ENCODE measurements at regions of chr14 and their contacts with region 1.

Region 1: DNA sequence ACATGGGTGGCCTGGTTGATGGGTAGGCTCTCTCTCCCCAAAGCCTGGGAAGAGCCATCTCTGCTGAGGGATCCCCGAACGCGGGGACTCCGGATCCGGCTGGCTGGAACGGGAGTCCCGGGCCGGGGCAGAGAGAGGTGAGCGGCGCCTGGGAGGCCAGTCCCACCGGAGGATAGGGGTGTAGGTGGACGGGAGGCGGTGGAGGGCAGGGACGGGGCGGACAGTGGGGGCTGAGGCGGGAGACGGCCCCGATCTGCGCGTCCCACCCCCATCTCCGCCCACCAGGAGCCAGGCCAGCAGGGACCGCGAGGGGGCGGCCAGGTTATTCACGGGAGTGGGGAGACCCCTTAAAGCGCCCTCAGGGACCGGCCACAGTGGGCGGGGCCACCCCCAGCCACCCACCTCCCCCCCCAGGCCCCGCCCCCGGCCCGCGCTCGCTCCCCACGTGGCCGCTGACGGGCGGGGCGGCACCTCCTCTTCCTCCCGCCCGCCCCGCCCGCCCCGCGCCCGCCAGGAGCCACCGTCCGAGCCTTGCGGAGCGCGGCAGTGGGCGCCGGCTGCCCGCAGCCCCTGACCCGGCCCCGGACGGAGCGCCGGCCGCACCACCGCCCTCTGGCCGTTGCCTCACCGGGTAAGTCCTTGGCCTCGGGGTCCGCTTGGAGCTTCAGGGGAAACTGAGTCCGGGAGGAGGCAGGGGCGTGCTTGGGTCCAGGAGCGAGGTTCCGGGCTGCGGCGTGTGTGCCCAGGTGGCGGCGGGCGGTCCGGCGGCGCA is at the start of gene INF2:
- DNase-seq: peak; percentile 62
- ATAC-seq: peak; percentile 57
- H3K4me3 ChIP-seq: peak within 1 kb of the TSS; percentile 74 to 90 (median 86)
- H3K27ac ChIP-seq: peak within 1 kb of the TSS; percentile 93
- H3K4me1 ChIP-seq: peaks cover 63% of the 10 kb centered on the region
- H3K27me3 ChIP-seq: no peaks in the 10 kb centered on the region
- CTCF ChIP-seq: peak; percentile 66
- EP300 ChIP-seq: no peak
- POLR2A ChIP-seq: peak in 1 of 2 experiments; percentile 50; a peak in 2 of 4 replicates
- RAD21 ChIP-seq: no peak
- total RNA-seq, gene INF2: 16.4 and 18.1 TPM in 2 replicates

Region 2: GRCh38 chr14:104650057-104650981 is 39.0 kb before region 1 on chr14:
- CTCF ChIA-PET with region 1: no interaction called
- POLR2A ChIA-PET with region 1: interaction called, 3 read pairs
- in situ Hi-C with region 1: no loop called
- intact Hi-C with region 1: loop called (anchors 5 kb)
- DNase-seq: peak; percentile 37
- ATAC-seq: peak; percentile 81
- H3K4me3 ChIP-seq: peak overlapping the region; percentile 19 to 70 (median 60); a peak in 4 of 6 replicates
- H3K27ac ChIP-seq: no peak overlapping the region
- H3K4me1 ChIP-seq: peaks cover 46% of the 10 kb centered on the region
- H3K27me3 ChIP-seq: peaks cover 2 to 19% of the 10 kb centered on the region in 2 experiments; a peak in 3 of 5 replicates
- CTCF ChIP-seq: peak; percentile 99
- EP300 ChIP-seq: no peak
- POLR2A ChIP-seq: no peak
- RAD21 ChIP-seq: peak; percentile 80

Region 3: DNA sequence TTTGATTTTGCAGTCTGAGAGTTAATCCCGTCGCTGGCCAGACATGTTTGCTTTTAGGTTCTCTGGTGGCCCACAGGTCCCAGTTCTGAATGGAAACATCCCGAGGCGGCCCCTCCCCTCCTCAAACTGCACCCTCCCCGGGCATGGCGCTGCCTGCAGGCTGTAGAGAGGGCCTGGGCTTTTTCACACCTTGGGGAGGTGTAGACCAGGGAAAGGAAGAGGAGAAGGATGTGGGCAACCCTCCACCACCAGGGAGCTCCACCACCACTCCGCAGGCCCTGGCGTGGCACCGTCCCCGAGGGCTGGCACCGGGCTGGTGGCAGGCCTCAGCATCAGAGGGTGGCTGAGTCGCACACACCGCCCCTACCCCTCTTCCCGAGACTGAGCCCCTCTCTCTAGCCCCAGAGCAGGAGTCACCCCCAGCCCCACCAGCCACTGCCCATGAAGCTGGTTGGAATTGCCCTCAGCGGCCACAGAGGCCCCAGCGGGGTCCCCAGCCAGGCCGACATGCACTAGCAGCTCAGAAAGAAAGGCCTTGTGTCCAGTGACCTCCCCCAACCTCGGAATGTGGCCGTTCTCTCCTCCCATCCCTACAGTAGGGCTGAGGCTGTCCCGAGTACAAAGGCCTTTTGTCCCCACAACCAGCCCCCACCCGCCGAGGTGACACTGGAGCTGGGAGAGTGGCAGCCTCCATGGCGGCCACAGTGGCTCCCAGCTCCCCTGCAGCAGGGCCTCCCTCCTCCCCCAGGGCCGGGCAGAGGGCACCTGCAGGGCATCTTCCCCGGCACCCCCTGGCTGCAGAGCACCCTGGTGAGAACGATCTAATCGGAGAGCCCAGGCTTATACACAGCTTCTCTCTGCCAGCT is 23.4 kb before region 1 on chr14:
- CTCF ChIA-PET with region 1: interaction called, 5 read pairs
- POLR2A ChIA-PET with region 1: interaction called, 89 read pairs
- in situ Hi-C with region 1: no loop called
- intact Hi-C with region 1: no loop called
- DNase-seq: peak; percentile 96
- ATAC-seq: peak; percentile 90
- H3K4me3 ChIP-seq: peak overlapping the region; percentile 29 to 69 (median 53); a peak in 5 of 6 replicates
- H3K27ac ChIP-seq: peak overlapping the region; percentile 97
- H3K4me1 ChIP-seq: peaks cover 48% of the 10 kb centered on the region
- H3K27me3 ChIP-seq: peaks cover 0 to 1% of the 10 kb centered on the region in 2 experiments; a peak in 1 of 5 replicates
- CTCF ChIP-seq: peak; percentile 65
- EP300 ChIP-seq: peak; percentile 74 to 87; a peak in 3 of 4 replicates
- POLR2A ChIP-seq: peak; percentile 77 to 88
- RAD21 ChIP-seq: no peak; the same call in none of the 2 replicates

Region 4: DNA sequence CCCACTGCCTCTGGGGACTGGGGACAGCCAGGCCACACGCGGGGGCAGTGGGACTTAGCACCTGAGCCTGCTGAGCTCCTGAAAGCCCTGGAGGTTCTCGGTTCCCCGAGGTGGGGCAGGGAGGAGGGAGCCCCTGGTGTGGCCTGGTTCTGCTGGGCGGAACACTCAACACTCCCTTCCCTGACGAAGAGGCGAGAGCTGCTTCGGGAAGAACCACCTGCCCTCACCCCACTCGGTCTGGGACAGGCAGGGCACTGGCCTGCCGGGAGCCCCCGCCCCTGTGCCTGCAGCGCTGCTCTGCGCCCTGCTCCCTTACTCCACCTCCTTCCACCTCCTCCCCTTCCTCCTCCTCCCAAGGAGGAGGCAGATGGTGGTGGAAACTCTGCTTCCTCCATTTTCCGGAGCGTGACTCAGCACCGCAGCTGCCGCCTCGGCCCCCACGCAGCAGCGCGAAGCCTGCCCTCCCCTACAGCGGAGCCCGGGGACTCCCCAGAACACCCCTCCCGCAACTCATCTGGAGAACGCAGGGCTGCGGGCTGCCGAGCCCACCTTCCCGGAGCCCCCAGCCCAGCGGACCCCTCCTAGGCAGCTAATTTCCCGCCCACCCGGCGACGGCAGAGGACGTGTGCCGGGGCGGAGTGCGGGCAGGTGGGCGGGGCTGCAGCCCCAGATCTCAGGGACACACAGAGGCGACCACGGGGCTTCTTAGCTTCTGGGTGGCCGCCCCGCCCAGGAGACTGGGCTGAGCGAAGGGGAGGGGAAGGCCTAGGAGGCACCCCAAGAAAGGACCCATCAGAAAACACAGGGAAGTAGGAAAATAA is 11.6 kb before region 1 on chr14:
- CTCF ChIA-PET with region 1: no interaction called
- POLR2A ChIA-PET with region 1: interaction called, 22 read pairs
- in situ Hi-C with region 1: no loop called
- intact Hi-C with region 1: no loop called
- DNase-seq: no peak
- ATAC-seq: peak; percentile 5
- H3K4me3 ChIP-seq: peak overlapping the region; percentile 41 to 68 (median 52); a peak in 5 of 6 replicates
- H3K27ac ChIP-seq: no peak overlapping the region
- H3K4me1 ChIP-seq: peaks cover 71% of the 10 kb centered on the region
- H3K27me3 ChIP-seq: no peaks in the 10 kb centered on the region; a peak in 1 of 5 replicates
- CTCF ChIP-seq: no peak
- EP300 ChIP-seq: no peak
- POLR2A ChIP-seq: no peak
- RAD21 ChIP-seq: no peak

Region 5: GRCh38 chr14:104708606-104709268 is 19.4 kb after region 1 on chr14:
- CTCF ChIA-PET with region 1: interaction called, 4 read pairs
- POLR2A ChIA-PET with region 1: interaction called, 6 read pairs
- in situ Hi-C with region 1: no loop called
- intact Hi-C with region 1: loop called (anchors 1 kb)
- DNase-seq: peak; percentile 35
- ATAC-seq: peak; percentile 75
- H3K4me3 ChIP-seq: no peak overlapping the region
- H3K27ac ChIP-seq: no peak overlapping the region
- H3K4me1 ChIP-seq: no peaks in the 10 kb centered on the region
- H3K27me3 ChIP-seq: no peaks in the 10 kb centered on the region
- CTCF ChIP-seq: peak; percentile 97
- EP300 ChIP-seq: no peak
- POLR2A ChIP-seq: no peak
- RAD21 ChIP-seq: peak; percentile 80

Region 6: DNA sequence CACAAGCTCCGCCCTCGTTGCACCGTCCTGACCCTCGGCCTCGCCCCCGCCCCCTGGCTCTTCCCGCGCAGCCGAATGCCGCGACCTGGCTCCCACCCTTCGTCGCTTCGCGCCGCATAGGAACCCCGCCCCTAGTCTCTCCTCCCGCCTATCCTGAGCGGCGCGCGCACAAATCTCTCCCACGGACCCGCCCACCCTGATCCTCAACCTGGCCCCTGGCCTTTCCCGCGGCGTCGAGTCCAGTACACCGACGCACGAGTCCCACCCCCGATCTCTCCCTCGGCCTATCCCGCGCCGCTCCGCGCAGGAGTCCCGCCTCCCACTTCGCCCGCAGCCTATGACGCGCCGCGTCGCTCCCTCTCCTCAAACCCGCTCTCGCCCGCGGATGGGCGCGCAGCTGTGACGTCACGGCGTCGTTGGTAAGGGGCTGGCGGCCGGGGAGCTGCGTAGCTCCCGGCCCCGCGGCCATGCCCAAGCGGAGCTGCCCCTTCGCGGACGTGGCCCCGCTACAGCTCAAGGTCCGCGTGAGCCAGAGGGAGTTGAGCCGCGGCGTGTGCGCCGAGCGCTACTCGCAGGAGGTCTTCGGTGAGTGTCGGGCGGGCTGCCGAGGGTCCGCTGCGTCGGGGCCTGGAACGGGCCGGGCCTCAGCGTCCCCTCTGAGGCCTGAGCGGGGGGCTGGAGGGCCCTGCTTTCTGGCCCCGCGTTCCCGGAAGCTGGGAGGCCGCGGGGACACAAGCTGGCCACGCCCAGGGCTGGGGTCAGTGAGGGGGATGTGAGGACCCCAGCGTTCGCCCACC is 63.6 kb after region 1 on chr14 and contains the start of gene SIVA1:
- CTCF ChIA-PET with region 1: no interaction called
- POLR2A ChIA-PET with region 1: interaction called, 13 read pairs
- in situ Hi-C with region 1: no loop called
- intact Hi-C with region 1: no loop called
- DNase-seq: peak; percentile 97
- ATAC-seq: peak; percentile 81
- H3K4me3 ChIP-seq: peak within 1 kb of the TSS; percentile 78 to 94 (median 80)
- H3K27ac ChIP-seq: peak within 1 kb of the TSS; percentile 88
- H3K4me1 ChIP-seq: peaks cover 69% of the 10 kb centered on the region
- H3K27me3 ChIP-seq: no peaks in the 10 kb centered on the region
- CTCF ChIP-seq: no peak; the same call in 1 of the 2 replicates
- EP300 ChIP-seq: no peak; a peak in 1 of 4 replicates
- POLR2A ChIP-seq: peak; percentile 83 to 86
- RAD21 ChIP-seq: peak; percentile 58
- total RNA-seq, gene SIVA1: 153 and 186 TPM in 2 replicates